Posterior vena cava (tissue), 2 donors: ENCODE measurements at regions of chr4 and their contacts with region 1.

Region 1: DNA sequence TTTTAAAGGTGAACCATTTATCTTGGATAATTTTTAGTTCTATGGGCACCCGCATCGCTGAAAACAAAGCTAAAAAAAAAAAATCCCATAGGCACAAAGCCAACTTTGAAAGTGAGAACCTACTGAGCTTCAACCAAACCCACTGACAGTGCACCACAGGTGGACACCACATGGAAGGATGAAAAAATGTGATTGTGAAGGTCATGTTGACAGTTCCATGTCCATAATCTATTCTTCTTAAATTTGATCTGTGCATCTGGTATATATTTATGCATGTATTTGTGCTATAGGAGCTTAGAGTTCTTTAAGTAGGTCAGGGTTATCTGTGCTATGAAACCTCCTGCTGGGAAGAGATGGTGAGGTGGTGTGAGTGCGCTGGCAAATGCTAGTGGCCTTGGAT is 374.3 kb downstream of the SPRY1 start:
- DNase-seq: no peak

Region 2: GRCh38 chr4:124262211-124263179 is 491.6 kb after region 1 on chr4:
- intact Hi-C with region 1: loop called in 1 of 2 experiments (anchors 5 kb)
- DNase-seq: no peak